Naive thymus-derived CD8-positive, alpha-beta T cell (primary cell): ENCODE measurements at regions of chr6 and their contacts with region 1.

Region 1: DNA sequence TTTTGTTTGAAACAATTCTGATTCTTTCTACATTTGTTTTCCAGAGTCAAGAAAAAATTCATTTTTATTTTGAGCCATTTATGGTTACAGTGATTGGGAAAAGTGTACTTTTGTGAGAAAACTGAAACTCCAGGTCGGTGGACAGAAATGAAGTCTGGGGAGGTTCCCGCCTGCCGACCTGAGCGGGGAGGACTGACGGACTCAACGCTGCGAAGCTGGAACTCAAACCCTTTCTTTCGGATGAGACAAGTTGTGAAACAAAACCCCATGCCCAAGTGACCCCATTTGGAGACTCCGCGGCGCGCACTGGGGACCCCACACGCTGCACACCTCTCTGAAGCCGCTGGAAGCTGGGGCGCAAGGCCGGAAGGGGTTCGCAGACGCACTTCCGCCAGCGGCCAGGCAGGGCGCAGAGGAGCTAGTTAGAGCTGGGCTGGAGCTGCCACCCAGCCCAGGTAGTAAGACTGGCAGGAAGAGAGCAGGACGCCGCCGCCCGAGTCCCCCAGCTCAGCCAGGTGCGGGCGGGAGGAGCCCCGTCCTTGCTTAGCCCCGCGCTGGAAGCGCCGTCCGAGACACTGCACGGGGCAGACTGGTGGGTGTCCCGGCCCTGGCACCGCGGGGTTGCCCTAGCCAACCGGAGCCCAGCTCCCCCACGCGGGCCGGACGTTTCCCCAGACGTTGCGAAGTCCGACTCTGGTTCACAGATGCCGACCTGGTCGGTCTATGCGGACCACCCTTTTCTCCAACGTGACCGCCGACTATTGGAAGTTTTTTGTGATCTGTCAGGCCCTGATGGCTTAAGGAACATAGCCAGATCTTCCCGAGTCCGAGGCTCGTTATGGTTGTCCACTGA is 19.8 kb upstream of the ZSCAN16 start:
- DNase-seq: peak; percentile 70 to 91 (median 82)
- ATAC-seq: peak; percentile 98 to 99
- H3K4me3 Mint-ChIP-seq: peak overlapping the region; percentile 89 to 95 (median 92)
- H3K27ac Mint-ChIP-seq: peak overlapping the region; percentile 89 to 98 (median 97)
- H3K4me1 Mint-ChIP-seq: peaks cover 5 to 13% (median 9%) of the 10 kb centered on the region in 4 donors
- H3K27me3 Mint-ChIP-seq: peaks cover 0 to 17% (median 5%) of the 10 kb centered on the region in 5 donors

Region 2: DNA sequence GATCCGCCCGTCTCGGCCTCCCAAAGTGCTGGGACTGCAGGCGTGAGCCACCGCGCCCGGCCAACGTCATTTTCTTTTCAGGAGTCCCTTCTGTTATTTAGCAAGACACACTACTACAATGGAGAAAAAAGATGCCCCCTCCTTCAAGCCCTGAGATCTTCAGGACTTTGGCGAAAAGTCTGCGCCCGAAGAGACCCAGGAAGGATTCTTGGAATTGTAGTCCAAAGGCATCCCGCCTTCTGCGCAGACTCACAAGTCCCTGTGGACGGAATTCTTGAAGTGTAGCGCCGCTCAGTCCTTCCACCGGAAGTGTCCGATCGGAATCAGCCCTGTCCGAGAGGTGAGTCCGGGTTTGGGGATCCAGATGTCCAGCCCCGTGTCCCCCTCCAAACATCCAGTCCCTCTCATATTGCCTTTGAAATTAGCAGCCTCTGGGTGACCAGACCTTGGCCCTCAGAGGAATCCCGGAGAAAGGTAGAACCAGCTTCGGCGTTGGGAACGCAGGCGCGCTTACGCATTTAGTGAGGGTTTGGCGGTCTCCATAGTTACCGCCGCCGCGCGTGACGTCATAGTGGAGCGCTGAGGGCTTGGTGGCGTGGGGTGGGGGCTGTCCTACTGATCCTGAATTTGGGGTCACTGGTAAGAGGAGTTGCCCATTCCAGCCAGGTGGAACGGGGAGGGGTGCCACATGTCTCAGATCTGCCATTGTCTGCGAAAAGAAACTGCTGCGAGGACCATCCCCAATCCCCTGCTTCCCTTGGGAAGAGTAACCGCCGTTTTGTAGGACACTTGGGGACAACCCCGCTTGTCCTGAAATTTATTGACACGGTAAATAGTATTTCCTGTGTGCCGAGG is 23.8 kb before region 1 on chr6:
- POLR2A ChIA-PET with region 1: interaction called, 13 read pairs
- DNase-seq: peak; percentile 81 to 99 (median 94)
- ATAC-seq: peak; percentile 72 to 77
- H3K4me3 Mint-ChIP-seq: peak overlapping the region; percentile 70 to 98 (median 98)
- H3K27ac Mint-ChIP-seq: peak overlapping the region; percentile 87 to 100 (median 100)
- H3K4me1 Mint-ChIP-seq: peaks cover 11 to 32% (median 18%) of the 10 kb centered on the region in 4 donors
- H3K27me3 Mint-ChIP-seq: no peaks in the 10 kb centered on the region

Region 3: DNA sequence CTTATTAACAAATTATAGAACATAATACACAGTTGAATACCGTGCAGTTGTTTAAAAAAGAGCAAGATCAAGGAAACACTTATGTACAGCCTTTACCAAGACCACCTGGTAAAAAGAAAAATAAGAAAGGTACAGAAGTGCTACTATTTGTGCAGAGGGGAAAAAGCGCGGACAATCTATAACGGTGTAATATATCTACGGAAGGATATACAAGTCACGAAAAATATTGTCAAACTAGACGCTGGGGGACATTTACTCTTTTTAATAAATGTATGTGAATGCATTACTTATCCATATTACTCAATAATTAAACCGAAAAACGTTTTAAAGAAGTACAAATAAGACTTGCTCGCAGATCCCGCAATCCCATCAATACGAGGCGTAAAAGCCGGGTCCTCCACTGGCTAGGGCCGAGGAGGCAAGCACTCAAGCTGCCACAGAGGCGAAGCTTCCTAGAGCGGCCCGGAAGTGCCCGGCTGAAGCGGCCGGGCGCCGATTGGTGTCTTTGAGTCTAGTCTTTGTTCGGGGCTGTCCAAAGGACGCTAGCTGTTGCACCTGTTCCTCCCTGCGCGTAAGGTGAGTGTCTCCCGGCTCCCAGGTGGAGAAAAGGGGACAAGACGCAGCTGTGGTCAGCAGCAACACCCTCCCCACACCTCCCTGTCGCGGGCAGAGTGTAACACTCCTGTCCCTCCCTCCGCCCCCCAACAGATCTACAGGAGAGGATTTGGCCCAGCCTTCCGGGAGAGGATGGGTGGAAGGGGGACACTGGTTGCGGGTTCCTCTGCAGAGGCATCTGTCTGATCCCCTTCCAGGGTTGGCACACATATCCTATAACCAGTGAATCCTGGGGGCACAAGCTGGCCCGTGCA is 19.7 kb after region 1 on chr6 and contains the start of gene ZSCAN16:
- POLR2A ChIA-PET with region 1: interaction called, 16 read pairs
- DNase-seq: peak; percentile 52 to 83 (median 67)
- ATAC-seq: peak; percentile 73 to 94
- H3K4me3 Mint-ChIP-seq: peak within 1 kb of the TSS; percentile 84 to 99 (median 95)
- H3K27ac Mint-ChIP-seq: peak within 1 kb of the TSS; percentile 95 to 99 (median 97)
- H3K4me1 Mint-ChIP-seq: peaks cover 32 to 56% (median 51%) of the 10 kb centered on the region in 4 donors
- H3K27me3 Mint-ChIP-seq: no peaks in the 10 kb centered on the region
- polyA plus RNA-seq, gene ZSCAN16: 6.0 to 13.2 (median 11.5) TPM